GM12878 (cell line): ENCODE measurements at regions of chr2 and their contacts with region 1.

Region 1: GRCh38 chr2:39913648-39914461 is 134.8 kb upstream of the THUMPD2 start:
- DNase-seq: peak; percentile 7
- ATAC-seq: peak; percentile 75
- H3K4me3 ChIP-seq: no peak overlapping the region
- H3K27ac ChIP-seq: no peak overlapping the region
- H3K4me1 ChIP-seq: no peaks in the 10 kb centered on the region
- H3K27me3 ChIP-seq: no peaks in the 10 kb centered on the region
- CTCF ChIP-seq: peak; percentile 59 to 75 (median 67); a peak in 5 of 6 replicates
- EP300 ChIP-seq: no peak
- POLR2A ChIP-seq: no peak
- RAD21 ChIP-seq: peak; percentile 89

Region 2: GRCh38 chr2:39338502-39338901 is 575.4 kb before region 1 on chr2:
- CTCF ChIA-PET with region 1: no interaction called
- POLR2A ChIA-PET with region 1: no interaction called
- RAD21 ChIA-PET with region 1: no interaction called
- SMC1A ChIA-PET with region 1: no interaction called
- in situ Hi-C with region 1: no loop called
- intact Hi-C with region 1: no loop called
- DNase-seq: no peak
- ATAC-seq: no peak
- H3K4me3 ChIP-seq: no peak overlapping the region
- H3K27ac ChIP-seq: no peak overlapping the region
- H3K4me1 ChIP-seq: no peaks in the 10 kb centered on the region
- H3K27me3 ChIP-seq: no peaks in the 10 kb centered on the region
- CTCF ChIP-seq: no peak
- EP300 ChIP-seq: no peak
- POLR2A ChIP-seq: no peak
- RAD21 ChIP-seq: no peak

Region 3: DNA sequence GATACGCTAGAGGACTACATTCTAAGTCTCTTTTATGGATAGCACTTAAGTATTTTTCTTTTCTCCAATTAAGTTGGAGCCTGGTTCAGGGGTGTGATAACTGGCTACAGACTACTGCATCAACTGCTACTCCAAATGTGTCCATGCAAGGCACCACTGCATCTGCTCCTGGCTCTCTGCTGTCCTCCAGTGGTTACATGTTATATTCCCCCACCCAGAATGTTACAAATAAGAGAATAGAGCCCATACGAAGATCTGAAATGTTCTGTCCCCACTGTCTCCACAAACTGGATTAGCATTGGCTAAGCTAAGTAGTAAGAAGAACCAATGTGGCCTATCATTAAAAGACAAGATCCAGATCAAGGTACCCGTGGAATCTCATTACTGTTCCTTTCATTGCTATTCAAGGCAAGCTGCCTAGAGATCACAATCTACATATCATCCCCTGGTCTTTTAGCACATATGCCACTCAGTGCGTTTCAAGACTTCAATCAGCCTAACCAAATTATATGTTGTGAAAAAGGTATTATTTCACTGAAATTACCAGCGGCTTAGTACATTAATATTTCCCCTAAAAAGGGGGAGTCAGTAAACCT is 846.3 kb after region 1 on chr2:
- CTCF ChIA-PET with region 1: no interaction called
- POLR2A ChIA-PET with region 1: no interaction called
- RAD21 ChIA-PET with region 1: no interaction called
- SMC1A ChIA-PET with region 1: no interaction called
- in situ Hi-C with region 1: no loop called
- intact Hi-C with region 1: loop called (anchors 5 kb)
- DNase-seq: no peak
- ATAC-seq: peak; percentile 84
- H3K4me3 ChIP-seq: no peak overlapping the region
- H3K27ac ChIP-seq: no peak overlapping the region
- H3K4me1 ChIP-seq: no peaks in the 10 kb centered on the region
- H3K27me3 ChIP-seq: no peaks in the 10 kb centered on the region
- CTCF ChIP-seq: peak; percentile 48 to 64 (median 55); a peak in 5 of 6 replicates
- EP300 ChIP-seq: no peak
- POLR2A ChIP-seq: no peak
- RAD21 ChIP-seq: peak; percentile 55

Region 4: DNA sequence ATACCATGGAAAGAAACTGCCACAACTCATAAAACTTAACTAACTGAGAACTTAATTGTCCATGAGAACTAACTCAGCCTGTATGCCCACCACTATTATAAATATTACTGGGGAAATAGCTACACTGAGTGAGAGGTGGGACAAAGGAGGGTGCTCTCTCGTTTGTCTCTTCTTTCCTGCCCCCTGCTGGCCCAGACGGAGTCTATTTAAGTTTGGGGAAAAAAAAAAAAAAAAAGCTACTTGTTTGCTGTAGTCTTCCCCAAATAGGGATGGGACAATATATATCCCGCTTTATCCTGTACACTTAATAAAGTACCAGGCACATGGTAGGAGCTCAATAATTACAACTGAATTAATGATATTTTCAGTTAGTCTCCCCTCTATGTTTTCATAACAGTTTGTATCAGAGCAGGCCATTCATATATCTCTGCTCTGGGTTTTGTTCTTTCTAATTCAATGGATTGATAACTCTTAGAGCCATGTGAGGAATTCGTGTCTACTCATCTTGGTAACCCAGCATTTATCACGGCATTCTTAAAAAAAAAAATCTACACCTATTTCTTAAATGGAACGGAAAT is 1486.3 kb after region 1 on chr2:
- CTCF ChIA-PET with region 1: interaction called, 11 read pairs
- POLR2A ChIA-PET with region 1: no interaction called
- RAD21 ChIA-PET with region 1: interaction called, 4 read pairs
- SMC1A ChIA-PET with region 1: interaction called, 4 read pairs
- in situ Hi-C with region 1: no loop called
- intact Hi-C with region 1: no loop called
- DNase-seq: no peak
- ATAC-seq: peak; percentile 45; the same call in 2 of the 3 replicates
- H3K4me3 ChIP-seq: no peak overlapping the region
- H3K27ac ChIP-seq: no peak overlapping the region
- H3K4me1 ChIP-seq: no peaks in the 10 kb centered on the region
- H3K27me3 ChIP-seq: no peaks in the 10 kb centered on the region
- CTCF ChIP-seq: peak; percentile 12 to 22 (median 19); a peak in 2 of 6 replicates
- EP300 ChIP-seq: no peak
- POLR2A ChIP-seq: no peak
- RAD21 ChIP-seq: no peak

Region 5: GRCh38 chr2:41782306-41783158 is 1868.7 kb after region 1 on chr2:
- CTCF ChIA-PET with region 1: no interaction called
- POLR2A ChIA-PET with region 1: no interaction called
- RAD21 ChIA-PET with region 1: no interaction called
- SMC1A ChIA-PET with region 1: interaction called, 3 read pairs
- in situ Hi-C with region 1: loop called (anchors 10 kb)
- intact Hi-C with region 1: loop called (anchors 10 kb)
- DNase-seq: peak; percentile 15
- ATAC-seq: peak; percentile 71
- H3K4me3 ChIP-seq: no peak overlapping the region
- H3K27ac ChIP-seq: no peak overlapping the region
- H3K4me1 ChIP-seq: no peaks in the 10 kb centered on the region
- H3K27me3 ChIP-seq: no peaks in the 10 kb centered on the region
- CTCF ChIP-seq: peak; percentile 74 to 87 (median 76)
- EP300 ChIP-seq: no peak
- POLR2A ChIP-seq: no peak
- RAD21 ChIP-seq: peak; percentile 95